RWPE1 (cell line): ENCODE measurements at regions of chr5 and their contacts with region 1.

Region 1: DNA sequence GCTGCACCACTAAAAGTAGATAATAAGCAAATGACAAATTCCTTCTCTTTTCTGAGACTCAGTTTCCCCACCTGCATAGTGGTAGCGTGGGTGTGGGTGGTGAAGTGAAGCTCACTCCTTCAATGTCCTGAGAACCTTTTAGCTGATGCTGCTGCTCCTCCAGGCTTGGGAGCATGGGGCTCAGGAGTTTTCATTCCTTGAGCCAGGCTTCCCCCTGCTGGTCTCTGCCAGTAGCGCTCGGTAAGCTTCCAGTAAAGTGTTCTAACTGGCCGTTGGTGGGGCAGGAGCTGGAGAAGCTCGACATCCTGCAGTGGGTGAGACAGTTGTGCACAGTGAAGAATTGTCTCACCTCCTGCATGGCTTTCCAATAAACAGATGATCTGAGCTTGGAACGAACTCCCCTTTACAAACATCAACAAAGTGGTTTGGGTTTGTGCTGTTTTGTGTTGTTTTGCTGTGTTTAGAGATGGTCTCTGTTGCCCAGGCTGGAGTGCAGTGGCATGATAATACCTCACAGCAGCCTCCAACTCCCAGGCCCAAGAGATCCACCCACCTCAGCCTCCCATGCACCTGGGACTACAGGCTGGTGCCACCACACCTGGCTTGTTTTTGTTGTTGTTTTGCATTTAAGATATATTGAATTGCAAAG is 34.6 kb downstream of the SPARC start:
- DNase-seq: peak; percentile 97
- H3K27ac ChIP-seq: peak overlapping the region; percentile 45
- CTCF ChIP-seq: peak; percentile 96

Region 2: GRCh38 chr5:151520294-151520693 is 131.8 kb before region 1 on chr5:
- CTCF ChIA-PET with region 1: interaction called, 12 read pairs
- POLR2A ChIA-PET with region 1: no interaction called
- DNase-seq: no peak
- H3K27ac ChIP-seq: peak overlapping the region; percentile 18
- CTCF ChIP-seq: no peak

Region 3: GRCh38 chr5:151569132-151570046 is 82.7 kb before region 1 on chr5:
- CTCF ChIA-PET with region 1: interaction called, 44 read pairs
- POLR2A ChIA-PET with region 1: interaction called, 3 read pairs
- DNase-seq: no peak
- H3K27ac ChIP-seq: peak overlapping the region; percentile 94
- CTCF ChIP-seq: no peak

Region 4: DNA sequence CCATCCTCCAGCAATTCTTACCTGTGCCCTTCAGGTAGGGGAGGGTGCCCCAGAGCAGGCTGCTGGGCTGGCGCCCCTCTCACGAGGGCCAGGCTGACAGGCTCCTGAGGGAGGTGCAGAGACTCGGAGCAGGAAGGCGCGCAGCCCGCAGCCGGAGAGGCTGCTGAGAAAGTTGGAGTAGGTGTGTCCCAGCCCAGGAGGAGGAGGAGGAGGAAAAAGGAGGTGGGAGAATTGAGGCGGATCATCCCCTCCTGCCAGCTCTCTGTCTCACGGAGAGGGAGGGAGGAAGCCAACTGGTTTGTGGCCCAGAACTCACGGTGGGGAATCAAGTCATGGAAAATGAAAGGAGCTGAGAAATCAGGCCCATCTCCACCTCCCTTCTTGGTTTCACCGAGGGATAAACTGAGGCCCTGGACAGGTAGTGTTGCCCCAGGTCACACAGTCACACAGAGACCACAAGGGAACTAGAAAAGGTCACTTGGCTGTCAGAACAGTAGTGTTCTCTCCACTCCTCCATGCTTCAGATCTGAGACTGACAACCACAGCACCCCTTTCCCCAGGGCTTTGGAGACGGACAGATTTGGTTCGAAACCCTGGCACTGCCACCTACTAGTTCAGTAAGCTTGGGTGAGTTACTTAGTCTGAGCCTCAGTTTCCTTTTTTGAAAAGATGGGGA is 60.8 kb before region 1 on chr5 and contains the start of gene FAT2:
- CTCF ChIA-PET with region 1: interaction called, 13 read pairs
- POLR2A ChIA-PET with region 1: interaction called, 4 read pairs
- DNase-seq: peak; percentile 89
- H3K27ac ChIP-seq: peak within 1 kb of the TSS; percentile 93
- CTCF ChIP-seq: no peak

Region 5: GRCh38 chr5:151637676-151638075 is 14.4 kb before region 1 on chr5:
- CTCF ChIA-PET with region 1: interaction called, 26 read pairs
- POLR2A ChIA-PET with region 1: no interaction called
- DNase-seq: peak; percentile 87
- H3K27ac ChIP-seq: peak overlapping the region; percentile 86
- CTCF ChIP-seq: no peak

Region 6: GRCh38 chr5:153237671-153238332 is 1585.7 kb after region 1 on chr5:
- CTCF ChIA-PET with region 1: no interaction called
- POLR2A ChIA-PET with region 1: no interaction called
- DNase-seq: no peak
- H3K27ac ChIP-seq: no peak overlapping the region
- CTCF ChIP-seq: no peak

Region 7: GRCh38 chr5:153619771-153620170 is 1967.7 kb after region 1 on chr5:
- CTCF ChIA-PET with region 1: no interaction called
- POLR2A ChIA-PET with region 1: no interaction called
- DNase-seq: peak; percentile 67
- H3K27ac ChIP-seq: no peak overlapping the region
- CTCF ChIP-seq: no peak